Posterior cingulate gyrus (tissue), 11 donors: ENCODE measurements at regions of chr10 and their contacts with region 1.

Region 1: DNA sequence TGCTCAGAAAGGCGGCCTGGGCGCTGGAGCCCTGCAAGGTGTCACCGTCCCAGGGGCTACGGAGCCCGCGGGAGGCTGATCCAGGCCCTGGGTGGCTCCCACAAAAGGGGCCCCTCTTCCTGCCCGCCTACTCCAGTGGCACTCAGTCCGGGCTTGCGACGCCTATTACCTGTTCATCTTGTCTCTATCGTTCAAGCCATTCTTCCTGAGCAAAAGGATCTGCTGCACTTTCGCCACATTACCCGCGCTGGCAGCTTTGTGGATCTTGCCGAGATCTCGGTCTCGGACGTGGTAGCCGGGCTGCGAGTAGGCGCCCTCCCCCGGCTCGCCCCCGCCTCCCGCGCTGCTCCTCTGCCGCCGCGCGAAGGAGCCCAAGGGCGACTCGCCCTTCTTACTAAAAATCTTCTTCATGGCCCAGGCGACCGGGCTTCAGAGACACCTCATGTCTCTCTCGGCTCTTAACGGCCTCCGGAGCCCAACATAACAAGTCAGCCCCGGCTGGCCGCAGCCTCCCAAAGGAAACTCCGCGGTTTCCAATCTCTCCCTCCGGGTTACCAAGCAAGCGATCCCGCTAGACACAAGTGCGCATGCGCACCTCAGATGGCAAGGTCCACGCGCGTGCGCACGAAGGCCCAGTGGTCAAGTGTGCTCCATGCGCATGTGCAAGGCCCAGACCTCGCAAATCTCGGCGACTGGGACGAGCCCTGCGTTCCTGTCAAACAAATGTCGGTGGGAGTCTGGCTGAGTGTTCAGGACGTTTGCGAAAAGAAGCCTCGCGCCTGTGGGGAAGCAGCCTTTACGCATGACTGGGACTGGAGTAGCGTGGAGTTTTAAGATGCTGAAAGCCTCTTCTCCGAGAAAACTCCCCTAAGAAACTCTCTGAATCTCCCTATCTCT is at the start of gene ANKRD26:
- DNase-seq: peak; percentile 92 to 99 (median 94)

Region 2: GRCh38 chr10:27241652-27242472 is 141.7 kb after region 1 on chr10:
- intact Hi-C with region 1: loop called (anchors 5 kb)
- DNase-seq: peak; percentile 81 to 98 (median 88)